ENCODE measurements at regions of chr12 and their contacts with region 1.

Region 1: DNA sequence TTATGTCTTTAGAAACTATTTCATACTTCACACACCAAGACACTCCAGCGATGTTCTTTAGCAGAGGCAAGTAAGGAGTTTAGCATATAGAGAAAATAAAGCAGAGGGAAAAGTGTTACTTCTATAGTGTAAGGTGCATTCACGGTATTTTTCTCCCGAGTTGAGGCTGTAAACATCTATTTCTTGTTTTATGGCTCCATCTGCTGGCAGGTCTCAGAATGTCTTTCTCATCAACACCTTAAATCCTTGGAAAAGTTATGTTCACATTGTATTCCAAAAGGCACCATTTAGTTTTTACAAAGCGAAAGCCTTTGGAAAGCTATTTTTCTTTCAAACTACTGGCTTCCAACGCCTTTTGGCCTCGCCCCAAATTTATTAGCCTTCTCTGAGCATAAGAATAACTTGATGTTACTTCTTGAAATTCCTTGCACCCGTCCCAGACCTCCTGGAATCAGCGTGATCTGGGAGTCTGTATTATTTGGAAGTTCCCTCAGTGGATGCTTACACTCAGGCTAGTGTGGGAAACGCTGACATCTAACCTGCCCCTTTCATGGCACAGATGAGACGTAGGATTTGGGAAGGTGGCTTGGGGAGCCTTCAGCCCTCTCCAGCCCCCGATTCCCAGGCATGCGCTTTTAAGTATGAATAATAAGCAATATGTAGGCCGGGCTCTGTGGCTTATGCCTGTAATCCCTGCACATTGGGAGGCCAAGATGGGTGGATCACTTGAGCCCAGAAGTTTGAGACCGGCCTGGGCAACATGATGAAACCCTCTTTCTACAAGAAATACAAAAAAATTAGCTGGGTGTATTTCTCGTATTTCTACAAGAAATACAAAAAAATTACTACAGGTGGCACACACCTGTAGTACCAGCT is 1.9 kb upstream of the PIWIL1 start:
- DNase-seq: peak in 7 of 9 donors; percentile 21 to 66 (median 58)
- ATAC-seq: no peak
- H3K4me3 ChIP-seq: no peak overlapping the region
- H3K4me3 Mint-ChIP-seq: no peak overlapping the region
- H3K27ac ChIP-seq: no peak overlapping the region
- H3K27ac Mint-ChIP-seq: no peak overlapping the region
- H3K4me1 ChIP-seq: no peaks in the 10 kb centered on the region
- H3K4me1 Mint-ChIP-seq: peaks cover 0 to 17% (median 6%) of the 10 kb centered on the region in 7 donors
- H3K27me3 ChIP-seq: no peaks in the 10 kb centered on the region
- H3K27me3 Mint-ChIP-seq: peaks cover 16 to 43% (median 36%) of the 10 kb centered on the region in 5 donors

Region 2: DNA sequence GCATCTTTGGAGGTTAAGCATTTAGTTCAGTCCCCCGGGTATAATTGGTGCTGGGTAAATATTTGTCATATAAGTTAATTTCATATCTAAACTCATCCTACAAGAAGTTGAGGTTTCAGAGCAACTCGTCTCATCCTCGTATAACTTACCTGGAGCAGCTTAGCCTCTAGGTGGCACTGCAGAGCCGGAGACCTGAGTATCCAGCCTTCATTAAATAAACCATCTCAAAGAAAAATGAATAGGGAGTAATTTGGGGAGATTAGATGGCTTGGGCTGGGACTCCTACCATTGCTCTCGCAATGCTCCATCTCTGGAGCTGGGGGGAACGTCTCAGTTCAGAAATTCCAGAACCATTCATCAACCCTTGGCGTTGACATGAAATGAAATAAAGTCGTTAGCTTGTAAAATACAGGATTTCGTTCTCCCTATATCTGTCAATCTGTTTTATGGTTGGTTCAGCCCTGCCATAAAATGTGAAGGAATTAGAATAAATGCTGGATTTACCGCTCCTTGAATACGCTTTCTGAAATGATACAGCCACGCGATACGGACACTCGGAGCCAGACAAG is 309.1 kb before region 1 on chr12:
- CTCF ChIA-PET with region 1: interaction called, 3 read pairs
- POLR2A ChIA-PET with region 1: no interaction called
- intact Hi-C with region 1: loop called in 1 of 2 experiments (anchors 1 kb)
- DNase-seq: peak in 5 of 9 donors; percentile 13 to 24 (median 20)
- ATAC-seq: no peak
- H3K4me3 ChIP-seq: no peak overlapping the region
- H3K4me3 Mint-ChIP-seq: no peak overlapping the region
- H3K27ac ChIP-seq: no peak overlapping the region
- H3K27ac Mint-ChIP-seq: no peak overlapping the region
- H3K4me1 ChIP-seq: no peaks in the 10 kb centered on the region
- H3K4me1 Mint-ChIP-seq: no peaks in the 10 kb centered on the region
- H3K27me3 ChIP-seq: no peaks in the 10 kb centered on the region
- H3K27me3 Mint-ChIP-seq: peaks cover 0 to 35% (median 26%) of the 10 kb centered on the region in 5 donors

Region 3: GRCh38 chr12:130041983-130042812 is 293.6 kb before region 1 on chr12:
- CTCF ChIA-PET with region 1: interaction called, 19 read pairs
- POLR2A ChIA-PET with region 1: no interaction called
- intact Hi-C with region 1: loop called in 1 of 2 experiments (anchors 1 kb)
- DNase-seq: peak; percentile 7 to 58 (median 39)
- ATAC-seq: peak; percentile 48
- H3K4me3 ChIP-seq: no peak overlapping the region
- H3K4me3 Mint-ChIP-seq: no peak overlapping the region
- H3K27ac ChIP-seq: no peak overlapping the region
- H3K27ac Mint-ChIP-seq: no peak overlapping the region
- H3K4me1 ChIP-seq: no peaks in the 10 kb centered on the region
- H3K4me1 Mint-ChIP-seq: peaks cover 0 to 7% (median 0%) of the 10 kb centered on the region in 7 donors
- H3K27me3 ChIP-seq: peaks cover 0 to 11% of the 10 kb centered on the region in 2 donors
- H3K27me3 Mint-ChIP-seq: peaks cover 25 to 76% (median 63%) of the 10 kb centered on the region in 5 donors

Region 4: GRCh38 chr12:130049666-130050065 is 286.1 kb before region 1 on chr12:
- CTCF ChIA-PET with region 1: interaction called, 19 read pairs
- POLR2A ChIA-PET with region 1: no interaction called
- intact Hi-C with region 1: no loop called
- DNase-seq: no peak
- ATAC-seq: no peak
- H3K4me3 ChIP-seq: no peak overlapping the region
- H3K4me3 Mint-ChIP-seq: no peak overlapping the region
- H3K27ac ChIP-seq: no peak overlapping the region
- H3K27ac Mint-ChIP-seq: no peak overlapping the region
- H3K4me1 ChIP-seq: peaks cover 0 to 4% of the 10 kb centered on the region in 2 donors
- H3K4me1 Mint-ChIP-seq: peaks cover 0 to 5% (median 3%) of the 10 kb centered on the region in 7 donors
- H3K27me3 ChIP-seq: peaks cover 0 to 4% of the 10 kb centered on the region in 2 donors
- H3K27me3 Mint-ChIP-seq: peaks cover 21 to 47% (median 35%) of the 10 kb centered on the region in 5 donors

Region 5: GRCh38 chr12:130281153-130281799 is 54.5 kb before region 1 on chr12:
- CTCF ChIA-PET with region 1: interaction called, 5 read pairs
- POLR2A ChIA-PET with region 1: no interaction called
- intact Hi-C with region 1: loop called in 1 of 2 experiments (anchors 1 kb)
- DNase-seq: peak in 8 of 9 donors; percentile 4 to 46 (median 42)
- ATAC-seq: peak; percentile 64
- H3K4me3 ChIP-seq: no peak overlapping the region
- H3K4me3 Mint-ChIP-seq: peak overlapping the region in 4 of 10 donors; percentile 15 to 58 (median 51)
- H3K27ac ChIP-seq: no peak overlapping the region
- H3K27ac Mint-ChIP-seq: no peak overlapping the region
- H3K4me1 ChIP-seq: peaks cover 0 to 4% of the 10 kb centered on the region in 2 donors
- H3K4me1 Mint-ChIP-seq: peaks cover 0 to 13% (median 6%) of the 10 kb centered on the region in 7 donors
- H3K27me3 ChIP-seq: no peaks in the 10 kb centered on the region
- H3K27me3 Mint-ChIP-seq: peaks cover 0 to 34% (median 4%) of the 10 kb centered on the region in 5 donors